Adrenal gland (tissue), 19 donors: ENCODE measurements at regions of chr18 and their contacts with region 1.

Region 1: DNA sequence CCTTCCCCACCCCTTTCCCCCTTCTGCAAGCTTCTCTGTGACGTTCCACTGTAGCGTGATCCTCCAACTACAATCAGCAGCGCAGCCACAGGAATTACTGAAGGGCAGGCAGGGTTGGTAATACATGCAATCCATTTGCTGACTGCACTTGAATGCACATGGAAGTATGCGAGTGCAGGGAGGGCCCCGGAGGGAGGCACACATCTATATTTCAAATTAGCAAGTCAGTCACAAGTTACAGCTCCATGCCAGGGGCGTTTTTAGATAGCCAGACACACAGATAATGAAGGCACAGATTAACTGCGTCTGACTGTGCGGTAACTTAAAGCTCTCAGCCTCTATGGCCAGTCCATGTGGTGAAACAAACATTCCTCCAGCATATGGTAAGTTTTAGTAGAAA is 209.2 kb upstream of the GATA6 start:
- DNase-seq: no peak
- H3K4me3 ChIP-seq: no peak overlapping the region
- H3K27ac ChIP-seq: no peak overlapping the region
- H3K4me1 ChIP-seq: no peaks in the 10 kb centered on the region
- H3K27me3 ChIP-seq: no peaks in the 10 kb centered on the region
- CTCF ChIP-seq: no peak
- POLR2A ChIP-seq: no peak

Region 2: DNA sequence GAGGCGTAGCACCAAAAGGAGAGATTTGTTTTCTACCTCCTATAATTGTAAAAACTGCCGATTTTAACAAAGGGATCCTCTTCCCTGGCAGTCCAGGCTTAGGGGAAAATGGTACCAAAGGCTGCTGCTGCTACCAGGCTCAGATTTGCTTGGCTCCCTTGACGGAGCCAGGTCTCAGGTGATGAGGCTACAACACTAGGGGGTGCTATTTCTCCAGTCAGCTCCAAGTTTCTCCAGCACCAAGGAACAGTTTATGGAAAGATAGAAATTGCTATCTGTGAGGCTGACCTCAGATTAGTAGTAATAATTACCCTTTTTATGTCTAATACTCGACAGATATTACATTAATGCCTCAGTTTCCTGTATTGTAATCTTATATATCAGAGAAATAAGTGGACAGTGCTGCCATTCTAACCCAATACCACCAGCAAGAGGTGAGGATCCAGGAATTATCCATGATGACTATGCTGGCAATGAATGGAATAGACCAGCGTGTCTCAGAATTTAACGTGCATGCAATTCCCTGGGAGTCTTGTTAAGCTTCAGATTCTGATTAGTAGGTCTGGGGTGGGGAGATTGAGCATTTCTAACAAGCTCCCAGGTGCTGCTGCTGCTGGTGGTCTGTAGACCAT is 471.0 kb before region 1 on chr18:
- intact Hi-C with region 1: loop called in 1 of 2 experiments (anchors 10 kb)
- DNase-seq: peak; percentile 52 to 72 (median 65)
- H3K4me3 ChIP-seq: no peak overlapping the region
- H3K27ac ChIP-seq: no peak overlapping the region
- H3K4me1 ChIP-seq: no peaks in the 10 kb centered on the region
- H3K27me3 ChIP-seq: no peaks in the 10 kb centered on the region
- CTCF ChIP-seq: peak; percentile 54 to 80 (median 72)
- POLR2A ChIP-seq: no peak

Region 3: DNA sequence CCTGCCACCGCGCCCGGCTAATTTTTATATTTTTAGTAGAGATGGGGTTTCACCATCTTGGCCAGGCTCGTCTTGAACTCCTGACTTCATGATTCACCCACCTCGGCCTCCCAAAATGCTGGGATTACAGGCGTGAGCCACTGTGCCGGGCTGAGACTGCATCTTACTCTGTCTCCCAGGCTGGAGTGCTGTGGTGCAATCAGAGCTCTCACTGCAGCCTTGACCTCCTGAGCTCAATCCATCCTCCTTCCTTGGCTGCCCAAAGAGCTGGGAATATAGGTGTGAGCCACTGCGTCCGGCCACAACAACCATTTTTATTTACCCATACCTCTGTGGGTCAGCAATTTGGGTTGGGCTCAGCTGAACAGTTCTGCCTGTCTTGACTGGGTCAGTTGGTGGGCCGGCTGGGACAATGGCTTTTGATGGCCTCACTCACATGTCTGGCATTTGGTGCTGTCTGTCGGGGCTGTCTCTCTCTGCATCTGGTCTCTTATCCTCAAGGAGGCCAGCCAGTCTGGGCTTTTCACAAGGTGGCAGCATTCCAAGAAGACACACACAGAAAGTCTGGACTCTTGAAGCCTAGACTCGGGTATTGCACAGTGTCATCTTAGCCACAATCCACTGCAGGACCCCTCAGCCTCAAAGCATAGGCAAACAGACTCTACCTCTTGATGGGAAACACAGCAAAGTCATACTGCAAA is 92.4 kb after region 1 on chr18:
- intact Hi-C with region 1: no loop called
- DNase-seq: peak; percentile 22 to 54 (median 37)
- H3K4me3 ChIP-seq: no peak overlapping the region
- H3K27ac ChIP-seq: no peak overlapping the region
- H3K4me1 ChIP-seq: peaks cover 0 to 1% of the 10 kb centered on the region in 2 donors
- H3K27me3 ChIP-seq: no peaks in the 10 kb centered on the region
- CTCF ChIP-seq: no peak
- POLR2A ChIP-seq: no peak